Right cardiac atrium (tissue), 5 donors: ENCODE measurements at regions of chr19 and their contacts with region 1.

Region 1: GRCh38 chr19:9674663-9675357 is at the start of gene ZNF562:
- DNase-seq: peak; percentile 90 to 96 (median 95)
- ATAC-seq: peak; percentile 98 to 99
- H3K4me3 ChIP-seq: peak within 1 kb of the TSS; percentile 89
- H3K27ac ChIP-seq: peak within 1 kb of the TSS; percentile 96
- H3K4me1 ChIP-seq: no peaks in the 10 kb centered on the region
- H3K27me3 ChIP-seq: no peaks in the 10 kb centered on the region
- total RNA-seq, gene ZNF562: 23.9 to 29.5 (median 25.9) TPM

Region 2: DNA sequence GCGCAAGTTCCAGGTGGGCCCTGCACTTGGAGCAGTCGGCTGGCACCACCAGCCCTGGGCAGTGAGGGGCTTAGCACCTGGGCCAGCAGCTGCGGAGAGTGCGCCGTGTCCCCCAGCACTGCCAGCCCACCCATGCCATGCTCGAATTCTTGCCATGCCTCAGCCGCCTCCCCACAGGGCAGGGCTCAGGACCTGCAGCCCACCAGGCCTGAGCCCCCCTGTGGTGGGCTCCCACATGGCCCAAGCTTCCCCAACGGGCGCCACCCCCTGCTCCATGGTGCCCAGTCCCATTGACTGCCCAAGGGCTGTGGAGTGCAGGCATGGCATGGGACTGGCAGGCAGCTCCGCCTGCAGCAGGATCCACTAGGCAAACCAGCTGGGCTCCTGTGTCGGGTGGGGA is 126.9 kb before region 1 on chr19:
- intact Hi-C with region 1: no loop called
- DNase-seq: no peak
- ATAC-seq: no peak
- H3K4me3 ChIP-seq: no peak overlapping the region
- H3K27ac ChIP-seq: no peak overlapping the region
- H3K4me1 ChIP-seq: no peaks in the 10 kb centered on the region
- H3K27me3 ChIP-seq: no peaks in the 10 kb centered on the region

Region 3: DNA sequence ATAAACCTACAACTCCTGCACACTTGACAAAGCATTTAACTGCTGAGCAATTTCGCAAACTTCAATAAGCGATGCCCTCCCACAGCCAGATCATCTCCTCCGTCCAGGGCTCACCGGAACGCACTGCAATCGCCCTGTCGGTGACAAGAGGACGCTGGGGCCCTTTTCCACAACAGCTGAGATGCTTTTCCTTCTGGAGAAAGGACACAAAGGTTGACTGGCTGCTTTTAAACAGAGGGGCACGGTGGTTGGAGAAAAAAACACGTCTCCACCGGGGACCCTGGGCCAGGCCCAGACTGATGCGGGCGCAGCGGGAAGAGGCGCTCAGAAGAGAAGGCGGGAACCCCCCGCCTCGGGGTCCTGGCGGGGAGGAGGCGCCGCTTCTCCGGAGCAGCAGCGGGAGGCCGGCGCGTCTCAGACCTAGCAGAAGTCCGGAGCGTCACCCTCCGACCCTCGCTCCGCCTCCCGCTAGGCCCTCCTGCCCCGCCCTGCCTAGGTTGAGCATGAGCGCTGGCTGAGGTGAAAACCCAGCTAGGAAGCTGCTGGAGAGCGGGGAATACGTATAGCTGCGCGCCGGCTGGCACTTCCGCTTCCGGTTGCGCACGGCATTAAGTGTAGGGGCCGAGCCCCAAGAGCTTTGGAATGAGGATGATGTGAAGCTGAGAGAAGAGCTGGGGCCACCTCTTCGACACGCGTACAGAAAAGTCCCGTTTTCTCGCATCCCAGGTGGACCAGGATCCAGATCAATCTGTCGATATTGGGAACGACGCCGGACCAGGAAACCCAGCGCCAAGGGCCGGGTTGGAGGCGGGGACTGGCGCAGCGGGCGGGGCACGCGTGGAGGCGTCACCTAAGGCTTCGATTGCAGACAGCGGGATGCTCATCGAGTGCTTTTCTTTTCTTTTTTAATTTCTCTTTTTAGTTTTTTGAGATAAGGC is 93.6 kb after region 1 on chr19 and contains the start of gene ZNF846:
- intact Hi-C with region 1: loop called in 1 of 4 experiments (anchors 5 kb)
- DNase-seq: peak; percentile 94 to 97 (median 97)
- ATAC-seq: peak; percentile 99 to 100
- H3K4me3 ChIP-seq: peak within 1 kb of the TSS; percentile 82
- H3K27ac ChIP-seq: peak within 1 kb of the TSS; percentile 88
- H3K4me1 ChIP-seq: no peaks in the 10 kb centered on the region
- H3K27me3 ChIP-seq: no peaks in the 10 kb centered on the region
- total RNA-seq, gene ZNF846: 8.4 to 14.6 (median 14.4) TPM

Region 4: GRCh38 chr19:9785367-9786331 is 110.8 kb after region 1 on chr19:
- intact Hi-C with region 1: loop called in 1 of 4 experiments (anchors 10 kb)
- DNase-seq: peak; percentile 98 to 99 (median 98)
- ATAC-seq: peak; percentile 95 to 97
- H3K4me3 ChIP-seq: peak overlapping the region; percentile 65
- H3K27ac ChIP-seq: peak overlapping the region; percentile 98
- H3K4me1 ChIP-seq: no peaks in the 10 kb centered on the region
- H3K27me3 ChIP-seq: no peaks in the 10 kb centered on the region